ENCODE measurements at regions of chr12 and their contacts with region 1.

Region 1: GRCh38 chr12:46342562-46343033 is 30.0 kb downstream of the SLC38A2 start:
- DNase-seq: peak; percentile 40 to 66 (median 66)
- H3K4me3 ChIP-seq: no peak overlapping the region
- H3K27ac ChIP-seq: no peak overlapping the region
- H3K4me1 ChIP-seq: peaks cover 0 to 2% (median 0%) of the 10 kb centered on the region in 4 experiments
- H3K27me3 ChIP-seq: no peaks in the 10 kb centered on the region

Region 2: GRCh38 chr12:46197860-46198259 is 144.7 kb before region 1 on chr12:
- CTCF ChIA-PET with region 1: no interaction called
- POLR2A ChIA-PET with region 1: no interaction called
- DNase-seq: no peak
- H3K4me3 ChIP-seq: no peak overlapping the region
- H3K27ac ChIP-seq: no peak overlapping the region
- H3K4me1 ChIP-seq: no peaks in the 10 kb centered on the region
- H3K27me3 ChIP-seq: no peaks in the 10 kb centered on the region

Region 3: GRCh38 chr12:46292755-46293402 is 49.7 kb before region 1 on chr12:
- CTCF ChIA-PET with region 1: no interaction called
- POLR2A ChIA-PET with region 1: no interaction called
- DNase-seq: no peak
- H3K4me3 ChIP-seq: no peak overlapping the region
- H3K27ac ChIP-seq: no peak overlapping the region
- H3K4me1 ChIP-seq: no peaks in the 10 kb centered on the region
- H3K27me3 ChIP-seq: no peaks in the 10 kb centered on the region

Region 4: DNA sequence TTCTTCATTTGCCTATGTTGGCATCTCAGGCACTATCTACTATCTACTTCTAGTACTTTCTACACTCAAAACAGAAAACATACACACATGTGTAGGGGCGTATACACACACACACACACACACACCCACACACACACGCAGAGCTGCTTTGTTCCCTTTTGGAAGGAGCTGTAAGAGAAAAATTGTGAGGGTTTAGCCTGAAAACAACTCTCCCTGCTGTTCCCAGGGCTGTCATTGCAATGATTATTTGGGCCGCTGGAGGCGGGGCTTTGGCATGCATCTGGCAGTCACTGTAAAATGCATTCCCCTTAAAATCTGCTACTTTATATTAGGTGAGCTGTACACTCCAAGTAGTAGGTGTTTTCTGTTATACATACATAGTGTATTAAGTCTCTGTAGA is 59.1 kb after region 1 on chr12:
- CTCF ChIA-PET with region 1: no interaction called
- POLR2A ChIA-PET with region 1: no interaction called
- DNase-seq: peak in 2 of 3 donors; percentile 34 to 44
- H3K4me3 ChIP-seq: no peak overlapping the region
- H3K27ac ChIP-seq: no peak overlapping the region
- H3K4me1 ChIP-seq: peaks cover 0 to 16% (median 11%) of the 10 kb centered on the region in 4 experiments
- H3K27me3 ChIP-seq: no peaks in the 10 kb centered on the region

Region 5: DNA sequence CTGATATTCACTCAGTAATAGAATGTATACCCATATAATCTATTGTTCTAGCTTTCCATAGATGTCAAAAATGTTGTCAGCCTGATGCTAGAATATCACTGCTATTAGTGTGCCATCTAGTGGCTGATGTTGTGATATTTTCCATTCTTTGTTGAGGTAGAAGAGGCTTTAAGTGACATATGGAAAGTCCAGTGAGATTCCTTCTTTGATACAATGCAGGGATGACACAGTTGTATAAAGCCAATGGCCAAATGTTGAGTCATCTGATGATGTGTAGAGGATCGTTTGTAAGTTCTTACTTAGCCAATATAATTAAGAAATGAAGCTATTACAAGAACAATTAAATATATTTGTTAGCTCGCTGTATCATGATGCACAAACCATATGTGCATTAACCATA is 678.7 kb after region 1 on chr12:
- CTCF ChIA-PET with region 1: interaction called, 12 read pairs
- POLR2A ChIA-PET with region 1: no interaction called
- DNase-seq: peak; percentile 43 to 74 (median 71)
- H3K4me3 ChIP-seq: no peak overlapping the region
- H3K27ac ChIP-seq: no peak overlapping the region
- H3K4me1 ChIP-seq: no peaks in the 10 kb centered on the region
- H3K27me3 ChIP-seq: no peaks in the 10 kb centered on the region